WTC11 (cell line): ENCODE measurements at regions of chr6 and their contacts with region 1.

Region 1: DNA sequence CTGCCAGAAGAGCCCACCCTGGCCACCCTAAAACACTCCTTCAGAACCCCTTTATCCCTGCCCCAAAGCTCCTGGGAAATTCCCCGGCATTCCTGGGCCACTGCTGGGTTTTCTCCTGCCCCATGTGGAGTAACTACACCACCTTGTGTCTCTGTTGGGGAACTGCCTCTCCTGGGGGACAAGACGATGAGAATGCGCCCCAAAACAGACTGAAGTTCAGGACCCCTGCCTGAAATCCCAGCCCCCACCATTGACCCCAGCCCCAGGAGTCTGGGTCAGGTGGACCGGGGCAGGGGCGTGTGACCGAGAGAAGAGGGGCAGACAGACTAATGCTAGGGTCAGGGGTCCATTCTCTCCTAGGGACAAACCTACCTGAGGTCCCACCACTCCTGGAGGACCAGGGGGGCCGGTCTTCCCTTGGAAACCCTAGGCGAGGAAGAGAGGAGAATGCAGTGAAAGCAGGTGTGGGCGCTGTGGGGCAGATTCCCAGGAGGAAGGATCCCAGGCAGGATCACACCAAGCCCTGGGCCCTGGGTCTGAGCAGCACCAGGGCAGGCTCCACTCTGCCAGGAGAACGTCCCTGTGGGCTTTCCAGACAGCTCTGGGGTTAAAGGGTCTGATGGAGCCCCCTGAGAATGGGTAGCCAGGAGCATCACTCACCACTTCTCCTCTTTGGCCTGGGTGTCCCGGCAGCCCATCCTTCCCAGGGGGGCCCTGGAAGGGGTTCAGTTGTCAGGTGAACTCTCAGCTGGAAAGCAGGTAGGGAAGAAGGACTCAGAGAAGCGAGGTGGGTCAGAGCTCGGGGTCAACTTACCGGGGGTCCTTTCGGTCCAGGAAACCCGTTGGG is 19.4 kb downstream of the COL11A2 start:
- DNase-seq: peak; percentile 71
- ATAC-seq: peak; percentile 79
- H3K4me3 Mint-ChIP-seq: no peak overlapping the region
- H3K27ac Mint-ChIP-seq: no peak overlapping the region; the same call in 1 of the 2 replicates
- H3K4me1 Mint-ChIP-seq: 0 out of 2 replicates have a peak, but pooled peaks cover 3% of the 10 kb centered on the region
- H3K27me3 Mint-ChIP-seq: peaks cover 7% of the 10 kb centered on the region; the same call in 1 of the 2 replicates
- CTCF ChIP-seq: peak; percentile 51

Region 2: DNA sequence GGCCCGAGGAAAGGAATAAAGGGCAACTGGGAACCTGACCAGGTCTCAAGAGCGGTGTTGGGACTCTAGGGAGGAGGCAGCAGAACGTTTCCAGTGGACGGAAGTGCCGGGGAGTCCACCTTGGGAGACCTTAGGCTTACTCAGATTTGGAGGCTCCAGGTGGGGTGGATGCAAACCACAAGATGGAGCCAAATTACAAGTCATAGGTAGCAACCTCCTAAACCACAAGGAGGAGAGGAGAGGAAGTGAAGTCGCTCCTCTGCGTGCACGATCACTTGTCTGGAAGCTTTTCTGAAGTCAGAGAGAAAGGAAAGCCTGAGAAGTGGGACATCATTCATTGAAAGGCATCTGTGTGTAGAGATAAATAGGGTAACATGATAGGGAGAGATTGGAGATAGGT is 172.9 kb before region 1 on chr6:
- CTCF ChIA-PET with region 1: interaction called, 19 read pairs
- POLR2A ChIA-PET with region 1: no interaction called
- DNase-seq: peak; percentile 67
- ATAC-seq: peak; percentile 98
- H3K4me3 Mint-ChIP-seq: no peak overlapping the region
- H3K27ac Mint-ChIP-seq: no peak overlapping the region
- H3K4me1 Mint-ChIP-seq: peaks cover 4% of the 10 kb centered on the region
- H3K27me3 Mint-ChIP-seq: peaks cover 2% of the 10 kb centered on the region; the same call in 1 of the 2 replicates
- CTCF ChIP-seq: peak; percentile 21; the same call in 1 of the 2 replicates

Region 3: DNA sequence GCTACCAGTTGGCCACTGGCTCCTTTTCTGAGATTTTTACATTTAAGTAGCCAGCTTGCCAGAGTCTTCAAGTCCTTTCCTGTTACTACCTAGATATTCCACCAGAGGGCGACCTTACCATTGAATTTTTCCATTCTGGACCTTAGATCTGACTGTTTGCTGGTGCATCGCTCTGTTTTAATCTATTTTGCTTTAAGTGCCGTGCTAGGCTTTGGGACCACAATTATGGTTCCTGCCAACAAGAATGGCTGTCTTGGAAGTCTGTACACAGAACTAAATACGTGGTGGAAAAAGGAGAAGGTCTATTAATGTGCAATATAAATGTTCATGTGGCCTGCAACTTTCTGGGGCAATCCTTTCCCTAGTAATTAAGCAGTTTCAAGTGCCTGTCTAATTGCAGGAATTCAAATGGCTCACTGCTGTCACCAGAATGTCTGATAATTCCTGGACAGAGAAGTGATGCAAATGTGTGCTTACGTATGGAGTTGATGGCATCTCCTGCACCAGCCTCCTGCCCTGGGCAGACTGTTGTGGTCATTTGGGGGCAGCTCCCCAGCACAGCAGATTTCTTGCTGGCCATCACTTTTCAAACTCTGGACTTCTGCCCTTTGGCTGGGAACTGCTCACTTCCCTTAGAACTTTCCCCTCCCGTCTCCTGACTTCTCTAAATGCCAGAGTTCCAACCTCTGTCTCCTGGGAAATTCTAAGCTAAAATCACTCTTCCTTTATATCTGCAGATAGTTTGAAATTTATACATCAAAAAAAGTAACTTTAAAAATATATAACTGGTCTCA is 157.9 kb before region 1 on chr6:
- CTCF ChIA-PET with region 1: interaction called, 12 read pairs
- POLR2A ChIA-PET with region 1: no interaction called
- DNase-seq: no peak
- ATAC-seq: peak; percentile 68
- H3K4me3 Mint-ChIP-seq: no peak overlapping the region
- H3K27ac Mint-ChIP-seq: no peak overlapping the region
- H3K4me1 Mint-ChIP-seq: peaks cover 51% of the 10 kb centered on the region
- H3K27me3 Mint-ChIP-seq: no peaks in the 10 kb centered on the region
- CTCF ChIP-seq: peak; percentile 68

Region 4: GRCh38 chr6:33118525-33119123 is 54.3 kb before region 1 on chr6:
- CTCF ChIA-PET with region 1: interaction called, 15 read pairs
- POLR2A ChIA-PET with region 1: no interaction called
- DNase-seq: no peak
- ATAC-seq: no peak
- H3K4me3 Mint-ChIP-seq: peak overlapping the region; percentile 98
- H3K27ac Mint-ChIP-seq: peak overlapping the region; percentile 100
- H3K4me1 Mint-ChIP-seq: peaks cover 76% of the 10 kb centered on the region
- H3K27me3 Mint-ChIP-seq: peaks cover 2% of the 10 kb centered on the region; the same call in 1 of the 2 replicates
- CTCF ChIP-seq: peak; percentile 89